ENCODE measurements at regions of chr7 and their contacts with region 1.

Region 1: DNA sequence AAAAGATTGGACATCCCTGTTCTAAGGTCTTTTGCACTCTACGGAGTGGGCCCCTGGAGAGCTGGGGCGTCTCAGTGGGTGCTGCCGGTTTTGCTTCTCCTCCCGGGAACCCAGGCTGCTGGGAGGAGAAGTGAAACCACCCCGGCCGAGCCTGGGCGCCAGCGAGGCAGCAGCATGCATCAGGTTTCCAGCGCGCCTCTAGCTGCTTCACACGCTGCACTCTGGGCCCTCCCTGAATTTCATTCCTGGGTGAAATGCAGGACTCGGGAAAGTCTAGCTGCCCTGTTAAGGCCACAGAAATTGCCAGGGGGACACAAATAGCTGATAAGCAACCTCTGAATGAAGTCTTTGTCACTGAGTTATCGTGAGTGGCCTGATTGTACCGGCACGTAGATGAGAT is 127.4 kb downstream of the TRRAP start:
- DNase-seq: no peak
- ATAC-seq: no peak

Region 2: GRCh38 chr7:98956937-98957336 is 48.8 kb before region 1 on chr7:
- intact Hi-C with region 1: loop called in 1 of 2 experiments (anchors 2 kb)
- DNase-seq: no peak
- ATAC-seq: peak; percentile 71 to 93

Region 3: GRCh38 chr7:99244939-99245338 is 239.2 kb after region 1 on chr7:
- intact Hi-C with region 1: no loop called
- DNase-seq: no peak
- ATAC-seq: no peak

Measured in left cardiac atrium (tissue), 4 donors.